GM10248 (cell line): ENCODE measurements at regions of chr19 and their contacts with region 1.

Region 1: GRCh38 chr19:4815426-4816201 is 15.9 kb downstream of the TICAM1 start:
- DNase-seq: peak; percentile 88
- CTCF ChIP-seq: no peak

Region 2: DNA sequence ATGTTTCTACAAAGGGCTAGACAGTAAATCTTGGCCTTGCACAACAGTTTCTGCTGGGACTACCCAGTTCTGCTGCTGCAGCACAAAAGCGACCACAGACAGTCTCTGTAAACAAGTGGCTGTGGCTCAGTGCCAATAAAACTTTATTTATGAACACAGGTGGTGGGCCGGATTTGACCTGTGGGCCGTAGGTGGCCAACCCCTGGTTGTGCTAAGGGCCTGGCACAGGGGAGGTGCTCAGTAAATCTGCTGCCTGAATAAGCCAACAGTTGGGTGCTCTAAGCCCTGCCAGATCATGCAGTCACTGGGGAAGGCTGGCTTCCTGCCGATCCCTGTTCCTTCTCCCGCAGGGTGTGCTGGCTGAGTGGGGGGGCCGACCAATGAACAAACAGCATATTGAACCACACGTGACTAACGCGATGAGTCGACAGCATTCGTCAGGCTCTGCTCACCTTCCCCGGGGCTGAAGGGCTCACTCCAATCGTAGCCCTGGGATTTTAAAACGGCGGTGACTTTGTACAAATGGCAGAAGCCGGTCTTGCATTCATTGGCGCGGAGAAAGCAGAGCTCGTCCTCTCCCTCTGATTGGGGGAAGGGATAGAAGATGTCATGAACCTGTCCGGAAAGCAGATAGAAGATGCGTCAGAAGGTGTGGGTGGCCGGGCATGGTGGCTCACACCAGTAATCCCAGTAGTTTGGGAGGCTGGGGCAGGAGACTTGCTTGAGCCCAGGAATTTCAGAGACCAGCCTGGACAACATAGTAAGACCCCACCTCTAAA is 121.2 kb before region 1 on chr19:
- CTCF ChIA-PET with region 1: no interaction called
- POLR2A ChIA-PET with region 1: no interaction called
- DNase-seq: no peak
- CTCF ChIP-seq: no peak

Region 3: DNA sequence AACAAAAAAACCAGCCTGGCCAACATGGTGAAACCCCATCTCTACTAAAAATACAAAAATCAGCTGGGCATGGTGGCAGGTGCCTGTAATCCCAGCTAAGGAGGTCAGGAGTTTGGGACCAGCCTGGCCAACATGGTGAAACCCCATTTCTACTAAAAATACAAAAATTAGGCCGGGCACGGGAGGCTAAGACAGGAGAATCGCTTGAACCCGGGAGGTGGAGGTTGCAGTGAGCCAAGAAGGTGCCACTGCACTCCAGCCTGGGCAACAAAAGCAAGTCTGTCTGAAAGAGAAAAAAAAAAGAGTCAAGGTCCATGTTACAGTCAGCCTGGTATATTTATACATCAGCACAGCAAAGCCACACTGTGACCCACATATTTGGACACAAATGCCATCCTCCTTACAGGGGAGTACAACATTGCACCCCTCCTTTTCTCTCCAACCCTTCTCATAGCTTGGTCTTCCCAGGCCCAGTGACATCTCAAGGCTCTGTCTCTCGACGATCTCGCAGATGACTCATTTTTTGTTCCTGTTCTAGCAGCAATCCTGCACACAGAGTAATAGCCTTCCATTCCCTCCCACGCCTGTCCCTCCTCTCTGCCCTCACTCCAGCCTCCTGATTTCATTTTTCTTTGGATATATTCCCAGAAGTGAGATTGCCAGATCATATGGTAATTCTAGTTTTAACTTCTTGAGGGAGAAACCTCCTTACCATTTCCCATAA is 71.0 kb before region 1 on chr19:
- CTCF ChIA-PET with region 1: no interaction called
- POLR2A ChIA-PET with region 1: no interaction called
- DNase-seq: no peak
- CTCF ChIP-seq: no peak

Region 4: DNA sequence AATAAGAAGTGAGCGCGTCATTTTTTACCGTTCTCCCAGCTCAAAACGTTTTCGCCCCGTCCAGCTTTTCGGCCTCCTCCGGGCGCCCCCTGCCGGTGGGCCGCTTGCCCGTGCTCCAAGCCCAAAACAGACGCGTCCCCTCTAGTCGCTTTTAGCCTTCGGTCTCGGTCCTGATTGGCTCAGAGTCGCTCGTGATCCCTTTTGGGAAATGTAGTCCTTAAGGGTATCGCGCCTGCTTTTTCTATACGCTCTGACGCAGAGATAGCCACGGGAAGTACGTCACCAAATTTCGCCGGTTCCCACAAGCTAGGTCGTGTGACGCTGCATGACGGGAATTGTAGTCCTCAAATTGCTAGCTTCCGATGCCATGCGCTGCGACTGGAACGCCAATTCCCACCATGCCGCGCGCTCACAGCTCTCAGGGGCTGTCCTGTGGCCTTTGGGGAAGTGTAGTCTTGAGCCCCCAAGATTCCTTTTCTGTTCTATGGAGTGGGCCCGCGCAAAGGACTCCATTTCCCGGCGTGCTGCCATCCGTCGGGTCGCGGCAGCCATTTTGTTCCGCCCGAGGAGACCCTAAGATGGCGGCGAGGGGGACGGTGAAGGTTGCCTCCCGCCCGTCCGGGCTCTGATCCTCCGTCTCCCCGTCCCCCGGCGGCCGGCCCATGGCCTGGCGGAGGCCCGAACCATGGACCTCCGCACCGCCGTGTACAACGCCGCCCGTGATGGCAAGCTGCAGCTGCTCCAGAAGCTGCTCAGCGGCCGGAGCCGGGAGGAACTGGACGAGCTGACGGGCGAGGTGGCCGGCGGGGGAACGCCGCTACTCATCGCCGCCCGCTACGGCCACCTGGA is 24.2 kb before region 1 on chr19 and contains the start of gene FEM1A:
- CTCF ChIA-PET with region 1: interaction called, 26 read pairs
- POLR2A ChIA-PET with region 1: no interaction called
- DNase-seq: peak; percentile 97
- CTCF ChIP-seq: peak; percentile 99

Region 5: GRCh38 chr19:4839186-4839585 is 23.6 kb after region 1 on chr19:
- CTCF ChIA-PET with region 1: interaction called, 242 read pairs
- POLR2A ChIA-PET with region 1: no interaction called
- DNase-seq: no peak
- CTCF ChIP-seq: no peak

Region 6: DNA sequence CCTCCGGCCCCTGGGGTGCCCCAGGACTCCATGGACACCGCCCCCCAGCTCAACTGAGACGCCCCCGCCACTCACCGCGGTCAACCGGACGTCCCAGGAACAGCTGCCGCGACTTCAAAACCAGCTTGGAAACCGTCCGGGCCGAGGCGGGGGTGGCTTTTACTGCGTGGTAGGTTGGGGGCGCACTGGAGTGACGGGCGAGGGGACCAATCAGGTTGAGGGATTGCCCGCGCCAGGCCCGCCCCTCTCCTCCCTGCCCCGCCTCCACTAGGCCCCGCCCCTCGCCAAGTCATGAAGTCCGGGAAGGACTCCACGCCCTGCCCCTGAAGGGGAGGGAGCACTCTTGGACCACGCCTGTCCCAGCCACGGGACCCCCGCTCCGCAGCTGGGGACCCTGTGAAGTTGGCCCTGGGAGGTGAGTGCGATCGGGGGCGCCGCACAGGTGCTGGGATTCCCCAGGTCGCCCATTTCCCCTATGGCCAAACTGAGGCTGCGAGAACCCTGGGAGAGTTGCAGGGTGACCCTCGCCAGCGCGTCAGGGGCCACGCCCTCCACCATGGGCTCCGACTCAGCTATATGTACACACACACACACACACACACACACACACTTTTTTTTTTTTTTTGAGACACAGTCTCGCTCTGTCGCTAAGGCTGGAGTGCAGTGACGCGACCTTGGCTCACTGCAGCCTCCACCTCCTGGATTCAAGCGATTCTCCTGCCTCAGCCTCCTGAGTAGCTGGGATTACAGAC is 52.1 kb after region 1 on chr19 and contains the start of gene PLIN3:
- CTCF ChIA-PET with region 1: interaction called, 10 read pairs
- POLR2A ChIA-PET with region 1: no interaction called
- DNase-seq: peak; percentile 100
- CTCF ChIP-seq: no peak

Region 7: GRCh38 chr19:4909897-4910593 is 94.4 kb after region 1 on chr19:
- CTCF ChIA-PET with region 1: interaction called, 172 read pairs
- POLR2A ChIA-PET with region 1: no interaction called
- DNase-seq: peak; percentile 98
- CTCF ChIP-seq: no peak

Region 8: GRCh38 chr19:4988770-4989251 is 173.2 kb after region 1 on chr19:
- CTCF ChIA-PET with region 1: no interaction called
- POLR2A ChIA-PET with region 1: no interaction called
- DNase-seq: no peak
- CTCF ChIP-seq: no peak